Posterior vena cava (tissue), 2 donors: ENCODE measurements at regions of chr1 and their contacts with region 1.

Region 1: GRCh38 chr1:99481391-99481996 is 164.4 kb upstream of the PALMD start:
- DNase-seq: no peak

Region 2: GRCh38 chr1:99533909-99534637 is 52.6 kb after region 1 on chr1:
- intact Hi-C with region 1: loop called in 1 of 2 experiments (anchors 2 kb)
- DNase-seq: no peak